K562 (cell line): ENCODE measurements at regions of chr16 and their contacts with region 1.

Region 1: GRCh38 chr16:31868691-31869167 is 4.9 kb upstream of the ZNF267 start:
- DNase-seq: peak; percentile 66 to 85 (median 70)
- ATAC-seq: peak; percentile 85
- H3K4me3 ChIP-seq: no peak overlapping the region
- H3K27ac ChIP-seq: no peak overlapping the region
- H3K4me1 ChIP-seq: no peaks in the 10 kb centered on the region; a peak in 4 of 5 replicates
- H3K27me3 ChIP-seq: peaks cover 0 to 4% of the 10 kb centered on the region in 2 experiments; a peak in 1 of 5 replicates
- CTCF ChIP-seq: peak; percentile 69 to 77 (median 75)
- EP300 ChIP-seq: no peak
- POLR2A ChIP-seq: no peak
- RAD21 ChIP-seq: peak; percentile 67 to 73

Region 2: GRCh38 chr16:31301708-31302400 is 566.9 kb before region 1 on chr16:
- CTCF ChIA-PET with region 1: no interaction called
- POLR2A ChIA-PET with region 1: no interaction called
- in situ Hi-C with region 1: no loop called
- intact Hi-C with region 1: loop called (anchors 10 kb)
- DNase-seq: peak in 3 of 4 experiments; percentile 13 to 24 (median 14)
- ATAC-seq: peak; percentile 84
- H3K4me3 ChIP-seq: no peak overlapping the region
- H3K27ac ChIP-seq: no peak overlapping the region
- H3K4me1 ChIP-seq: peaks cover 0 to 5% of the 10 kb centered on the region in 2 experiments; a peak in 1 of 5 replicates
- H3K27me3 ChIP-seq: peaks cover 3 to 4% of the 10 kb centered on the region in 2 experiments; a peak in 1 of 5 replicates
- CTCF ChIP-seq: no peak
- EP300 ChIP-seq: no peak
- POLR2A ChIP-seq: no peak
- RAD21 ChIP-seq: peak in 1 of 2 experiments; percentile 10; a peak in 1 of 4 replicates

Region 3: GRCh38 chr16:31404353-31405064 is 464.2 kb before region 1 on chr16:
- CTCF ChIA-PET with region 1: no interaction called
- POLR2A ChIA-PET with region 1: no interaction called
- in situ Hi-C with region 1: no loop called
- intact Hi-C with region 1: no loop called
- DNase-seq: peak; percentile 74 to 80 (median 78)
- ATAC-seq: peak; percentile 92
- H3K4me3 ChIP-seq: peak overlapping the region; percentile 48
- H3K27ac ChIP-seq: peak overlapping the region; percentile 50; the same call in 2 of the 3 replicates
- H3K4me1 ChIP-seq: peaks cover 3 to 10% of the 10 kb centered on the region in 2 experiments; a peak in 2 of 5 replicates
- H3K27me3 ChIP-seq: peaks cover 5 to 22% of the 10 kb centered on the region in 2 experiments; a peak in 4 of 5 replicates
- CTCF ChIP-seq: no peak
- EP300 ChIP-seq: no peak
- POLR2A ChIP-seq: peak; percentile 68
- RAD21 ChIP-seq: no peak

Region 4: GRCh38 chr16:31713071-31713944 is 155.4 kb before region 1 on chr16:
- CTCF ChIA-PET with region 1: no interaction called
- POLR2A ChIA-PET with region 1: no interaction called
- in situ Hi-C with region 1: no loop called
- intact Hi-C with region 1: loop called (anchors 5 kb)
- DNase-seq: peak; percentile 94 to 97 (median 96)
- ATAC-seq: peak; percentile 96
- H3K4me3 ChIP-seq: peak overlapping the region; percentile 92
- H3K27ac ChIP-seq: peak overlapping the region; percentile 96
- H3K4me1 ChIP-seq: peaks cover 11 to 13% of the 10 kb centered on the region in 2 experiments
- H3K27me3 ChIP-seq: no peaks in the 10 kb centered on the region
- CTCF ChIP-seq: no peak
- EP300 ChIP-seq: no peak
- POLR2A ChIP-seq: peak; percentile 98
- RAD21 ChIP-seq: no peak